ENCODE measurements at regions of chr2 and their contacts with region 1.

Region 1: DNA sequence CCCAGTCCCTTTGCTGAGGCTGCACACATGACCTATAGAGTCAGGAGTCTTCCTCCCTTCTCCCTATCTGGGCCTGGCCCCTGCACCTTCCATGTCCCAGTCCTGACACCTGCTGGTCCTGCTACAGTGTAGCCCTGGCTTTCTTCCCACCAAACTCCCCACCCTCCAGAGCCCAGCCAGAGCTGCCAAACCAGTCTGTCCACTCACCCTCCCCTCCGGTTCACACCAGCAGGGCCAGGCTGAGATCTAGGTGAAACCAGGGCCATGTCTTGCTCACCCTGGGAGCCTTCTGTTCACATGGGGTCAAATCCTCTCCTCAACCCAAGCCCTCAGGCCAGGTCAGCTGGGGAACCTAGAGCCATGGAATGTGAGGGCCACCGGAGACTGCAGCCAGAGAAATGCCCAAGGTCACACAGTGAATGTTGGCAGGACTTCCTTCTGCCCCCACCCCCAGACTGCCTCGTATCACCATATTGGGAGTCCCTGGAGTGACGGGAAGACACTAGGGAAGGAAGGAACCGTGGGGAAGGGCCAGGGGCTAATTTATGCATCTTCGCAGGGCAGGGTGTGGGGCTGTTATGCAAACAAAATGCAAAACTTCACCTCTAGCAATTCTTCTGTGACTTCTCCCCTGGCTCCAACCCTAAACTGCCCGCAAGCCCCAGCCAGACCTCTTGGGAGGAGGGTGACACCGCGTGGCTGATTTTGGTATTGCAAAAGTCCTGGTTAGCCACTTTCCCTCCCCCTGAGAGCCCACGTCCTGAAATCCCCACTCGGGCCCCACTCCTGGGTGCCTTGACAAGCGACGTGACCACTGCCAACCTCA is 14.6 kb downstream of the TNS1 start:
- DNase-seq: peak; percentile 84 to 92 (median 91)
- H3K4me3 ChIP-seq: no peak overlapping the region
- H3K27ac ChIP-seq: peak overlapping the region in 1 of 2 donors; percentile 32
- H3K4me1 ChIP-seq: peaks cover 12% of the 10 kb centered on the region
- H3K27me3 ChIP-seq: no peaks in the 10 kb centered on the region
- CTCF ChIP-seq: peak; percentile 84 to 92 (median 91)
- EP300 ChIP-seq: no peak
- POLR2A ChIP-seq: no peak

Region 2: GRCh38 chr2:217886720-217887309 is 101.4 kb before region 1 on chr2:
- intact Hi-C with region 1: loop called in 2 of 4 experiments (anchors 5 to 10 kb)
- DNase-seq: peak; percentile 68 to 84 (median 81)
- H3K4me3 ChIP-seq: no peak overlapping the region
- H3K27ac ChIP-seq: no peak overlapping the region
- H3K4me1 ChIP-seq: peaks cover 4% of the 10 kb centered on the region
- H3K27me3 ChIP-seq: no peaks in the 10 kb centered on the region
- CTCF ChIP-seq: peak; percentile 70 to 79 (median 75)
- EP300 ChIP-seq: no peak
- POLR2A ChIP-seq: no peak

Region 3: GRCh38 chr2:217899231-217900009 is 88.8 kb before region 1 on chr2:
- intact Hi-C with region 1: loop called in 2 of 4 experiments (anchors 5 to 10 kb)
- DNase-seq: peak; percentile 69 to 84 (median 73)
- H3K4me3 ChIP-seq: no peak overlapping the region
- H3K27ac ChIP-seq: peak overlapping the region in 1 of 2 donors; percentile 66
- H3K4me1 ChIP-seq: peaks cover 53% of the 10 kb centered on the region
- H3K27me3 ChIP-seq: no peaks in the 10 kb centered on the region
- CTCF ChIP-seq: peak; percentile 28 to 63 (median 54)
- EP300 ChIP-seq: no peak
- POLR2A ChIP-seq: peak; percentile 8

Region 4: GRCh38 chr2:218186355-218186766 is 198.1 kb after region 1 on chr2:
- intact Hi-C with region 1: no loop called
- DNase-seq: peak; percentile 38 to 74 (median 62)
- H3K4me3 ChIP-seq: no peak overlapping the region
- H3K27ac ChIP-seq: no peak overlapping the region
- H3K4me1 ChIP-seq: no peaks in the 10 kb centered on the region
- H3K27me3 ChIP-seq: no peaks in the 10 kb centered on the region
- CTCF ChIP-seq: peak; percentile 33 to 68 (median 55)
- EP300 ChIP-seq: no peak
- POLR2A ChIP-seq: no peak

Region 5: GRCh38 chr2:218245214-218245613 is 257.0 kb after region 1 on chr2:
- intact Hi-C with region 1: no loop called
- DNase-seq: no peak
- H3K4me3 ChIP-seq: no peak overlapping the region
- H3K27ac ChIP-seq: no peak overlapping the region
- H3K4me1 ChIP-seq: no peaks in the 10 kb centered on the region
- H3K27me3 ChIP-seq: no peaks in the 10 kb centered on the region
- CTCF ChIP-seq: no peak
- EP300 ChIP-seq: no peak
- POLR2A ChIP-seq: no peak